ENCODE measurements at regions of chr16 and their contacts with region 1.

Region 1: GRCh38 chr16:85027349-85027957 is at the start of gene KIAA0513:
- DNase-seq: peak; percentile 60 to 95
- H3K4me3 ChIP-seq: peak within 1 kb of the TSS; percentile 93 to 94
- H3K27ac ChIP-seq: peak within 1 kb of the TSS; percentile 59 to 81
- H3K4me1 ChIP-seq: peaks cover 8 to 19% of the 10 kb centered on the region in 2 donors
- H3K27me3 ChIP-seq: no peaks in the 10 kb centered on the region
- CTCF ChIP-seq: no peak
- total RNA-seq, gene KIAA0513: 131 TPM

Region 2: GRCh38 chr16:84933774-84934631 is 93.5 kb before region 1 on chr16:
- intact Hi-C with region 1: no loop called
- DNase-seq: peak; percentile 64 to 91
- H3K4me3 ChIP-seq: peak overlapping the region in 1 of 2 donors; percentile 24
- H3K27ac ChIP-seq: peak overlapping the region; percentile 82 to 91
- H3K4me1 ChIP-seq: peaks cover 11 to 21% of the 10 kb centered on the region in 2 donors
- H3K27me3 ChIP-seq: no peaks in the 10 kb centered on the region
- CTCF ChIP-seq: no peak

Region 3: DNA sequence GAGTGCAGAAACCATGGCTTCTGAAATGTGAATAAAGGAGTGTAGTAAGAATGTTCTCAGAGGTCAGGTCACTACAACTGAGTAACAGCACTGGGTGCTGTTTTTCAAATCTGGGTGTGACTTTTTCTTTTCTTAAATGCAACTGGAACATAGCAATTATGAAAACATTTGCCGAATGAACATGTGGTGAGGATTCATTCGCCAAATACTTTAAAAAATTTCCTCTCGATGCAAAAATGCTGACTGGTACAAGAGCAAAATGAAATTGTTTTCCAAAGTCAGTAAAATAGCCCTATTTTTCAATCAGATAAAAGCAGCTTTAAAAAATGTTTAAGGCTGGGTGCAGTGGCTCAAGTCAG is 34.8 kb before region 1 on chr16:
- intact Hi-C with region 1: loop called (anchors 5 kb)
- DNase-seq: no peak
- H3K4me3 ChIP-seq: no peak overlapping the region
- H3K27ac ChIP-seq: peak overlapping the region; percentile 90
- H3K4me1 ChIP-seq: peaks cover 14 to 35% of the 10 kb centered on the region in 2 donors
- H3K27me3 ChIP-seq: no peaks in the 10 kb centered on the region
- CTCF ChIP-seq: no peak

Region 4: GRCh38 chr16:85010931-85011845 is 16.3 kb before region 1 on chr16 and contains the start of gene ZDHHC7:
- intact Hi-C with region 1: loop called (anchors 1 kb)
- DNase-seq: peak; percentile 27 to 93
- H3K4me3 ChIP-seq: peak within 1 kb of the TSS; percentile 95 to 98
- H3K27ac ChIP-seq: peak within 1 kb of the TSS; percentile 90 to 96
- H3K4me1 ChIP-seq: peaks cover 2 to 39% of the 10 kb centered on the region in 2 donors
- H3K27me3 ChIP-seq: no peaks in the 10 kb centered on the region
- CTCF ChIP-seq: no peak
- total RNA-seq, gene ZDHHC7: 70.7 TPM

Region 5: DNA sequence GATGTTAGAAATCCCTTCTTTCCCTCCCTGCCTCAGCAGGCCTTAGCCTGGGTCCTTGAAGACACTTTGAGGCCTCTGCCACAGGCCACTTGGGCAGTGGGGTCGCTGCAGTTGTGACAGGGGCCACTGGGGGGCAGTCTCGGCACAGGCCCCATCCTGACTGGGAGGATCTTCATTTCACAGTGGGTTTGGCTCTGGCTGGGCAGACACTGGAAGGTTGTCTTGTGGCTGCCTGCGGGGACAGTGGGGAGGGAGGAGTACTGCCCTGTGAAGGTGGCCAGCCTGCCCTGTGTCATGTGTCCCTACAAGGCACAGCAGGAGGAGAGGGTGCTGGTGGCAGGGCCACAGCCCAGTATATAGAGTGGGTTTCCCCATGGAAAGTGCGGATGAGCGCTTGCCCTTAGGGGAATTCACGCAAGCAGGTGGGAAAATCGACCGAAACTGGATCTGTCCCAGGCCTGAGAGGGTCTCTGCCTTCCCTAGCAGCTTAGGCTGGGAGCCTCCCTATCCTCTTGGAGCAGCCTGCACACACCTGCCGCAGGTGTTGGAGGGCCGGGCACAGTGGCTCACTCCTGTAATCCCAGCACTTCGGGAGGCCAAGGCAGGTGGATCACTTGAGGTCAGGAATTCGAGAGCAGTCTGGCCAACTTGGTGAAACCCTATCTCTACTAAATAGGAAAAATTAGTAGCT is 632.5 kb after region 1 on chr16:
- intact Hi-C with region 1: no loop called
- DNase-seq: no peak
- H3K4me3 ChIP-seq: no peak overlapping the region
- H3K27ac ChIP-seq: no peak overlapping the region
- H3K4me1 ChIP-seq: no peaks in the 10 kb centered on the region
- H3K27me3 ChIP-seq: no peaks in the 10 kb centered on the region
- CTCF ChIP-seq: peak; percentile 36 to 71 (median 68)